SK-N-SH (cell line): ENCODE measurements at regions of chr1 and their contacts with region 1.

Region 1: DNA sequence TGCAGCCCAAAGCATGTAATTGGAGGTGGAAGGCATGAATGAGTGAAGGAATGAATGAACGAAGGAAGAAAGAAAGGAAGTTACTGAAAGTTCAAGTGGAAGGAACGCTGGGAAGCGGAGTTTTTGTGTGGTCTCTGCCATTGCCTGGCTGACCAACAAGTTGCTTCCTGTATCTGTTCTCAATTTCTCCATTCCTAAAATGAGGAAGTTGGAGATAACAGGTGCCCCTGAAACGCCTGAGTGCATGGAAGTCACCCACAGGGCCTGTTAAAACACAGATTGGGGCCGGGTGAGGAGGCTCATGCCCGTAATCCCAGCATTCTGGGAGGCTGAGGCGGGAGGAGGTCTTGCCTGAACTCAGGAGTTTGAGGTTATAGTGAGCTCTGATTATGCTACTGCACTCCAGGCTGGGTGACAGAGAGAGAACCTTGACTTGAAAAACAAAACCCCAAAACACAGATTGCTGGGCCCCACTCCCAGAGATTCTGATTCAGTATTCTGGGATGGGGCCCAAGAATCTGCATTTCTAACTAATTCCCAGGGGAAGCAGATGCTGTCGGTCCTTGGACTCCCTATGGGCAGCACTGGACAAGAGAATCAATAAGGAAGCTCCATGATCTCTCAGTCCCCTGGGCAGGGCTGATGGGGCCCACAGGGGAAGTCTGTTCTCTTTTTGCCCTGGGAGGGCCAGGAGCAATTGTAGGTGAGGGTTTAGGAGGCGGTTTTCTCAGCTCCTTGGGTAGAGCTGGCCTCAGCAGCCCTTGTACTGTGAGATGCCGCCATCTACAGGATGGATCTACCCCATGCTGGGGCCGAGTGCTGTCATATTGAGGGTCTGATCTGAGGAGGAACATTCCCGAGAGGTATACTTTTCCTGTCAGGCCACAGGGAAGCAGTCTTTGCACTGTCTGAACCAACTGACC is 3.3 kb upstream of the CNR2 start:
- DNase-seq: peak; percentile 85
- H3K4me3 ChIP-seq: no peak overlapping the region
- H3K27ac ChIP-seq: no peak overlapping the region
- H3K4me1 ChIP-seq: peaks cover 0 to 6% of the 10 kb centered on the region in 2 experiments; a peak in 1 of 4 replicates
- H3K27me3 ChIP-seq: no peaks in the 10 kb centered on the region
- CTCF ChIP-seq: peak; percentile 62
- EP300 ChIP-seq: no peak
- RAD21 ChIP-seq: peak; percentile 93

Region 2: GRCh38 chr1:23772049-23772853 is 144.2 kb before region 1 on chr1:
- CTCF ChIA-PET with region 1: interaction called, 35 read pairs
- POLR2A ChIA-PET with region 1: interaction called, 7 read pairs
- DNase-seq: peak; percentile 75
- H3K4me3 ChIP-seq: peak overlapping the region in 1 of 2 experiments; percentile 38; a peak in 1 of 4 replicates
- H3K27ac ChIP-seq: no peak overlapping the region
- H3K4me1 ChIP-seq: peaks cover 5 to 9% of the 10 kb centered on the region in 2 experiments; a peak in 2 of 4 replicates
- H3K27me3 ChIP-seq: no peaks in the 10 kb centered on the region
- CTCF ChIP-seq: peak; percentile 88
- EP300 ChIP-seq: no peak
- RAD21 ChIP-seq: peak; percentile 82

Region 3: DNA sequence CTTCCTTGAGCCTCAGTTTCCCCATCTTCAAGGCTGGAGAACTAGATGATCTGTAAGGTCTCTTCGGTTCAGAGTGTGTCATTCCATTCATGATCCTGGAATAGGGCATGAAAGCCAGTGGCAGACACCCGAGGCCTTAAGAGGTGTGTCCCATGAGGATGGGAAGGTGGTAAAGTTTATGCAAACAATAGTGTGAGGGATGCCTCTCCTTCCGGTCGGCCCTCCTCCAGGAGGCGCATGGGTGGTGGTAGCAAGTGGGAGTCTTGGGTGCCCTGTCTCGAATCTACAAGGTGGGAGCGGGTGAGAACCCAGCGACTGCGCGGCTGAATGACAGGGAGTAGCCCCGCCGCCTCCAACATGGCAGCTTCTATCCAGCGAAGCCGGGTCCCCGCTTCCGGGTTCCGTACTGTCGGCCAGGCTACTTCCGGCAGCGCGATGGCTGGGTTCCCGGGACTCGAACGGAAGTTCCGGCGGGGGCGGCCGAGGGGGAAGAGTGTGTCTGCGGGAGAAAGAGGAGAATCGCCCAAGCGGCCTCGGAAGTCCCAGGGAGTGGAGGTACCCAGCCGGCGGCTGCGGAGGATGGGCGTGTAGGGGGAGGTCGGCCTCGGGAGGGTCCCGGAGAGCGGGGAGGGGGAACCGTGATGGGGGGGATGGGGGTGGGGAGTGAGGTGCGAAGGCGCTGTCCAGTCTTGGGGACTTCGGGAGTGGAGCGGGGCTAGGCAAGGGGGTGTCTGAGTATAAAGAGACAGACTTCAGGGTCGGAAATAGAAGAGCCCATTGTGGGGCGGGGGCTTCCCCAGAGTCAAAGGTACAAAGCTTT is 125.6 kb before region 1 on chr1 and contains the start of gene LYPLA2:
- CTCF ChIA-PET with region 1: interaction called, 14 read pairs
- POLR2A ChIA-PET with region 1: no interaction called
- DNase-seq: peak; percentile 94
- H3K4me3 ChIP-seq: peak within 1 kb of the TSS; percentile 97 to 98
- H3K27ac ChIP-seq: peak within 1 kb of the TSS; percentile 73 to 91
- H3K4me1 ChIP-seq: peaks cover 6 to 21% of the 10 kb centered on the region in 2 experiments; a peak in 3 of 4 replicates
- H3K27me3 ChIP-seq: no peaks in the 10 kb centered on the region
- CTCF ChIP-seq: no peak
- EP300 ChIP-seq: peak in 1 of 2 experiments; percentile 27; a peak in 1 of 4 replicates
- RAD21 ChIP-seq: no peak
- polyA plus RNA-seq, gene LYPLA2: 109 and 135 TPM in 2 replicates

Region 4: GRCh38 chr1:23809751-23810171 is 106.7 kb before region 1 on chr1:
- CTCF ChIA-PET with region 1: interaction called, 41 read pairs
- POLR2A ChIA-PET with region 1: no interaction called
- DNase-seq: peak; percentile 74
- H3K4me3 ChIP-seq: peak overlapping the region in 1 of 2 experiments; percentile 26; a peak in 1 of 4 replicates
- H3K27ac ChIP-seq: no peak overlapping the region
- H3K4me1 ChIP-seq: no peaks in the 10 kb centered on the region
- H3K27me3 ChIP-seq: no peaks in the 10 kb centered on the region
- CTCF ChIP-seq: peak; percentile 66
- EP300 ChIP-seq: no peak
- RAD21 ChIP-seq: peak; percentile 73

Region 5: GRCh38 chr1:23904748-23905357 is 11.6 kb before region 1 on chr1:
- CTCF ChIA-PET with region 1: interaction called, 17 read pairs
- POLR2A ChIA-PET with region 1: no interaction called
- DNase-seq: no peak
- H3K4me3 ChIP-seq: no peak overlapping the region
- H3K27ac ChIP-seq: peak overlapping the region in 1 of 2 experiments; percentile 39; a peak in 2 of 4 replicates
- H3K4me1 ChIP-seq: peaks cover 0 to 16% of the 10 kb centered on the region in 2 experiments; a peak in 1 of 4 replicates
- H3K27me3 ChIP-seq: peaks cover 23% of the 10 kb centered on the region; the same call in 1 of the 2 replicates
- CTCF ChIP-seq: no peak
- EP300 ChIP-seq: no peak
- RAD21 ChIP-seq: no peak